Ascending aorta (tissue), 2 donors: ENCODE measurements at regions of chr21 and their contacts with region 1.

Region 1: GRCh38 chr21:40143822-40144525 is 276.7 kb downstream of the PCP4 start:
- DNase-seq: no peak
- H3K4me3 ChIP-seq: no peak overlapping the region
- H3K27ac ChIP-seq: no peak overlapping the region
- H3K4me1 ChIP-seq: no peaks in the 10 kb centered on the region
- H3K27me3 ChIP-seq: no peaks in the 10 kb centered on the region
- CTCF ChIP-seq: peak in 2 of 3 experiments; percentile 54 to 66

Region 2: DNA sequence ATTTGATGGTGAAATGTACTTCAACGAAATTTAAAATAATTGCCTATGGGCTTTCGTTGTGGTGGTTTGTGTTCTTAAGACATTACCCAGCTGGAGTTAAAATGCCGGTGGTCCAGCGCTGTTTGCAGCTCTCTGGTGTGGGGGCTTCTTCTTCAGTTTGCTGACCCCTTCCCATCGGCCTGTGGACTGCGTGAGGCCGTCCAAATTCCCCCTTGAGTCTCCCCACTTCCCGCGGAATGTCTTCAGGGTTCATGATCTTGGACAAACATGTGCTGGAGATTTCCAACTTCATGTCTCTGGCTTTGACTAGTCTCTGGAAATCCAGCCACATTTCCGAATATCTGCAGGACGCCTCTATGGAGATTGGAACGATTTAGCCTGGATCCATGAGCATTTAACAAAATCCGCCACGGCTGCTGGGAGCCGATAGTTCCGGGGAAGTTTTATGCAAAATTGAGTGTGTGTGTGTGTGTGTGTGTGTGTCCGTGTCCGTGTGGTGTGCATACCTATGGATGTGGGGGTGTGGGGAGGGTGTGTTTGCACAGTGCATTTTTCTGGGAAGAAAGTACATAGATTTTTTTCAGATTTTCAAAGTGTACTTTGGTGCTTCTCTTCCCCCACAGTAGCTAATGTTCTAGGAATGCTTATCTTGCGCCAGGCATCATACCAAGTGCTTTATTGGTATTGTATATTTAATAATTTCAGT is 159.5 kb before region 1 on chr21:
- intact Hi-C with region 1: no loop called
- DNase-seq: no peak
- H3K4me3 ChIP-seq: no peak overlapping the region
- H3K27ac ChIP-seq: no peak overlapping the region
- H3K4me1 ChIP-seq: no peaks in the 10 kb centered on the region
- H3K27me3 ChIP-seq: no peaks in the 10 kb centered on the region
- CTCF ChIP-seq: no peak

Region 3: DNA sequence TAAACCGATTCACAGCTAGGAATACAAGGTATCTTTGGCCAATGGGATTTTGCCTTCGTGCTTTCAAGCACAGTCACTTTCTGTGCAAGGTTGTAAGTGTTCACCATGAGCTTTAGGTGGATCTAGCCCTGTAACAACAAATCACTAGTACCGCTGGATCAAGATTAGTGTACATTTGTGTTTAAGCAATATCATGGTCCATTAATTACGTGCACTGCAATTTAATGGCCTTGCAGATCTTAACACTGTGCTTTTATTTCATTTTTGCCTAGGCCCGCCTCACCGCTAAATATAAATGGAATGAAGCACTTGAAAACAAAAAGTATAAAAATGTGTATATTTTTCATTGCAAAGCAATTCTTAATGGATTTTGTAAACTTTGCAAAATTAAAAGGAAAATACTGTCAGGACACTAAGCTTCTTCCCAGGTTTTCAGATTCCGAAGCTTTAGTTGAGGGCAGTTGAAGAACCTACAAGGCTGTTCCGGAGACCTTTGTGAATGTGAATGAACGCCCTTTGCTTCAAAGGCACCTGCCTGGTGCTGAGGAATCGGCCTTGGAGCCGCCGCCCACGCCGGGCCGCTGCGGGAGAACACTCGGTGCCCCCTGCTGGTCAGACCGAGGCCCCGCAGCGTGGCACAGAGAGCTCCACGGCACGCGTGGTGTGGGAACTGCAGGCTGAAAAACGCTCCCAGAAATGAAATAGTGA is 242.1 kb after region 1 on chr21:
- intact Hi-C with region 1: loop called (anchors 5 kb)
- DNase-seq: no peak
- H3K4me3 ChIP-seq: no peak overlapping the region
- H3K27ac ChIP-seq: no peak overlapping the region
- H3K4me1 ChIP-seq: no peaks in the 10 kb centered on the region
- H3K27me3 ChIP-seq: no peaks in the 10 kb centered on the region
- CTCF ChIP-seq: peak in 2 of 3 experiments; percentile 33 to 58

Region 4: DNA sequence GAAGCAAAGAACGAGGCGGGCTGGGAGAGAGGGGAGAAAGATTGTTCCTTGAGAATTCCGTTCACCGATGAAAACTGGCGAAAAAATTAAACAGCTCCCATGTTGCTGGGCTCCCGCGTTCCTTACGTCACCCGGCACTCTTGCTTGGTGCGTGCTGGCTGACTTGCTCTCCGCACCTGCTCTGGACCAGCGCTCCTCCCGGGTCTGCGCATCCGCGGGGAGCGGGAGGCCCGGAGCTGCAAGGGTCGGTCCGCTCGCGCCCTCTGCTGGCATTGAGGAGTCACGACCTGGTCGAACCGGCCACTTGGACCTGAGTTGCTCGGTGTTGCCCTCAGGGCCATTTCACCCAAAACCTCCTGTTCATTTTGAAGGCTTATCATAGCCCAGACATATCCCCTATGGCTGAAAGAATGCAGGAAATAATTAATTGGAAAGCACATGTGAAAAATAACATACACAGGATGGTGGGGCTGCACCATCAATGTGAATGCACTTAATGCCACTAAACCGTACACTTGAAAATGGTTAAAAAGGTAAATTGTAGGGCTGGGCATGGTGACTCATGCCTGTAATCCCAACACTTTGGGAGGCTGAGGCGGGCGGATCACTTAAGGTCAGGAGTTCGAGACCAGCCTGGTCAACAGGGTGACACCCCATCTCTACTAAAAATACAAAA is 925.1 kb after region 1 on chr21:
- intact Hi-C with region 1: loop called (anchors 5 kb)
- DNase-seq: peak in 1 of 2 donors; percentile 80
- H3K4me3 ChIP-seq: peak overlapping the region; percentile 37 to 45
- H3K27ac ChIP-seq: no peak overlapping the region
- H3K4me1 ChIP-seq: no peaks in the 10 kb centered on the region
- H3K27me3 ChIP-seq: no peaks in the 10 kb centered on the region
- CTCF ChIP-seq: peak; percentile 63 to 76 (median 72)